ENCODE measurements at regions of chr5 and their contacts with region 1.

Region 1: DNA sequence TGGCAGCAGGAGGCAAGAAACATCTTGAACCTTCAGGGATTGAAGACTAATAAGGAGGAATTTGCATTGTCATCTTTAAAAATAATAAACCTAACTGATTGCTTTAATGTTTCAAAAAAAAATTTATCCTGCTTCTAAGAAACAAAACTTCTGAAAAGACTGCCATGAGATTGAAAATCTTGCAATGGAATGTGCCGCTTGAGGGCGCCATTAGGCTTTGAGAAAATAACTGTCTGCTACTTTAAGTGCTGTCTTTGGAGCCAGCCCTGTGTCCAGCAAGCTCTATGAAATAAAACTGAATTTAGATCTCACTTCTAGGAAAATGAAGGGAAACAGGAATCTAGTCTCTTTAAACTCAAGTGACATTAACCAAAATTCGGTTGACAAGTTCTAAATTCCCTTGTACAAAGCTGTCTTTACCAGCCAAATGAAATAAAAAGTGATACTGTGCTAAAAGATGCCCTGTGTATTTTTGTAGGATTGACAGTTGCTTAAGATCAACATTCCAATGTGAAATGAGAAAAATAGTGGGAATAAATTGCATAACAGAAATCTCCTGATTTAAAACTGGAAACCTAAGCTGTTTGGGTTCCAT is 79.4 kb downstream of the ESM1 start:
- DNase-seq: peak; percentile 26
- CTCF ChIP-seq: peak; percentile 57

Region 2: GRCh38 chr5:54927097-54927746 is 21.2 kb after region 1 on chr5:
- CTCF ChIA-PET with region 1: interaction called, 10 read pairs
- POLR2A ChIA-PET with region 1: no interaction called
- DNase-seq: no peak
- CTCF ChIP-seq: no peak

Region 3: DNA sequence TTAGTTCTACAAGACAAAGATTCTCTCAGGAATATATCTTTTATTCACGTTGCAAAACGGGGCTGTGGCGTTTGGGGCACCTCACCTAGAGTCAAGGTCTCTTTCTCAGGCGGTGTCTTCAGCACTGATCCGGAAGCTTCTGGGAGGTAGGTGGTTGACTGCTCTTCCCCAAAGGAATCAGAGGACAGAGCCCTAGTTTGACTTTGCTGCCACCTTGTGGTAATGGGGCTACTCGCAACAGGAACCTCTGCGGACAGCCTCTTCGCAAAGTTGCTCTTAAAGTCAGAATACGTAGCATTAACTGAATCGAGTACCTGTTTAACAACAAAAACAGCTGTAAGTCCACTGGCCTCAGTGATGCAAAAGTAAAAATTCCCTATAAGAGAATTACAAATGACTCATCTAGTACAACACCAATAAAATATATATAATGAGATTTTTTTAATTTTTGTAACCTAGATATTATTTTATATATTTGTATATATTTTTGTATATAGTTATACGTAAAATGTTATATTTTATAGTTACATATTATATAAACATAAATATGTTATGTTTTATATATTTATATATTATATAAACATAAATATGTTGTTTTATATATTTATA is 240.6 kb after region 1 on chr5:
- CTCF ChIA-PET with region 1: interaction called, 23 read pairs
- POLR2A ChIA-PET with region 1: no interaction called
- DNase-seq: peak; percentile 66
- CTCF ChIP-seq: peak; percentile 89

Region 4: DNA sequence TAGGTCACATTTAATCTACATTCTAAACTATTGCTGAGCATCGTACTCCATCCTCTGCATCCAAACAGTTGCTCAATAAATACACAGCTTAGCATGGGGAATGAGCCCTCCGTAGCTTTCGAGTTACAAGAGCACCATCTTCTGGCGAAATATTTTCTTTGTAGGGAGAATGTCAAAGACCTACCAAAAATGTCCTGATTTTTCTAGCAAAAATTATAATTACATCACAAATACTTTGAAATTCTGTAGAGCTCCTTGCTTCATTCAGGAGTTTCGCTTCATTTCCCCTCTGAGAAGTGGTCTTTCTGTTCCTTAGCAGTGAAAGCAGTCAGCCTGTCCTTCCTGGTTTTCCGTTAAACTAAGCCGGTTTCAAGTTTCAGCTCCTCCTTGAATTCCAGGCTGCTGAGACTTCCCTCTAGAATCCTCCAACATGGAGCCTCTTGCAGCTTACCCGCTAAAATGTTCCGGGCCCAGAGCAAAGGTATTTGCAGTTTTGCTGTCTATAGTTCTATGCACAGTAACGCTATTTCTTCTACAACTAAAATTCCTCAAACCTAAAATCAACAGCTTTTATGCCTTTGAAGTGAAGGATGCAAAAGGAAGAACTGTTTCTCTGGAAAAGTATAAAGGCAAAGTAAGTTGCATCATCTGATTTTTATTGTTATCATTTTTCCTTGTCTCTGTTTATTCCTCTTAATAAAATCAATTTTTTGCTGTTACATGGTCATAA is 253.9 kb after region 1 on chr5 and contains the start of gene GPX8:
- CTCF ChIA-PET with region 1: interaction called, 11 read pairs
- POLR2A ChIA-PET with region 1: no interaction called
- DNase-seq: no peak
- CTCF ChIP-seq: no peak